ENCODE measurements at regions of chr14 and their contacts with region 1.

Region 1: DNA sequence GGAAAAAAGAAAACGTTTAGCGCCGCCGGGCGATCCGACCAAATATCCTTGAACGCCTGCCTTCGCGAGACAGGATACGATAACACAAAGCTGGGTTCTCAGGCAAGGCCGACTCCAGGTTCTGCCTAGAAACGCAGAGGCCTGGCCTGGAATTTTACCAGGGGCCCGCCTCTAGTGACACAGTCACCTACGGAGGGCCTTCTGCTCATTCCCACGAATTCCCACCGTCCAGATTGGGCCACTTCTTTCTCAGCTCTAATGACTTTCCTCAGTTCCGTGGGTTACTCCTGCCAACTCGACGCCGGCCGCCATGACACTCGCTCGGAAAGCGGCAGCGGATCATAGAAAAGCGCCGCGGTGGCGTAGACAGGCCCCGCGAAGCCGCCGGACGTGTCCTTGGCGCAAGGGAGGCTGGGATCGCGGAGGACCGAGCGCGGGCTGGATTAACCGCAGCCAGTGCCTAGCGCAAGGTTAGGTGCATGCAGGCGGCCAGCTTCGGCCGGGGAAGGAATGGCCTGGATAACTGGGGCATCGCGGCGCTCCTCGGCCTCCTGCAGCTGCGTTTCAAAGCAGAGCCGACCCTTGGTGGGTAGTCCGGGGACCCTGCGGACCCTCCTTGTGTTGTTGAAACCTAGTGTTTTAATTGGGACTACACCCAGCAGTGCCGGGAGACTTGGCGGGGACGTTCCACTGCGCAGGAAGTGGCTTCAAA is at the start of gene TRIP11:
- DNase-seq: peak; percentile 97
- ATAC-seq: peak; percentile 96
- H3K4me3 Mint-ChIP-seq: peak within 1 kb of the TSS; percentile 95
- H3K27ac Mint-ChIP-seq: peak within 1 kb of the TSS; percentile 99
- H3K4me1 Mint-ChIP-seq: peaks cover 31% of the 10 kb centered on the region
- H3K27me3 Mint-ChIP-seq: no peaks in the 10 kb centered on the region
- total RNA-seq, gene TRIP11: 47.9 to 49.7 TPM

Region 2: GRCh38 chr14:91466192-91466591 is 573.7 kb before region 1 on chr14:
- POLR2A ChIA-PET with region 1: no interaction called
- DNase-seq: no peak
- ATAC-seq: no peak
- H3K4me3 Mint-ChIP-seq: no peak overlapping the region
- H3K27ac Mint-ChIP-seq: no peak overlapping the region
- H3K4me1 Mint-ChIP-seq: peaks cover 5% of the 10 kb centered on the region
- H3K27me3 Mint-ChIP-seq: no peaks in the 10 kb centered on the region

Region 3: DNA sequence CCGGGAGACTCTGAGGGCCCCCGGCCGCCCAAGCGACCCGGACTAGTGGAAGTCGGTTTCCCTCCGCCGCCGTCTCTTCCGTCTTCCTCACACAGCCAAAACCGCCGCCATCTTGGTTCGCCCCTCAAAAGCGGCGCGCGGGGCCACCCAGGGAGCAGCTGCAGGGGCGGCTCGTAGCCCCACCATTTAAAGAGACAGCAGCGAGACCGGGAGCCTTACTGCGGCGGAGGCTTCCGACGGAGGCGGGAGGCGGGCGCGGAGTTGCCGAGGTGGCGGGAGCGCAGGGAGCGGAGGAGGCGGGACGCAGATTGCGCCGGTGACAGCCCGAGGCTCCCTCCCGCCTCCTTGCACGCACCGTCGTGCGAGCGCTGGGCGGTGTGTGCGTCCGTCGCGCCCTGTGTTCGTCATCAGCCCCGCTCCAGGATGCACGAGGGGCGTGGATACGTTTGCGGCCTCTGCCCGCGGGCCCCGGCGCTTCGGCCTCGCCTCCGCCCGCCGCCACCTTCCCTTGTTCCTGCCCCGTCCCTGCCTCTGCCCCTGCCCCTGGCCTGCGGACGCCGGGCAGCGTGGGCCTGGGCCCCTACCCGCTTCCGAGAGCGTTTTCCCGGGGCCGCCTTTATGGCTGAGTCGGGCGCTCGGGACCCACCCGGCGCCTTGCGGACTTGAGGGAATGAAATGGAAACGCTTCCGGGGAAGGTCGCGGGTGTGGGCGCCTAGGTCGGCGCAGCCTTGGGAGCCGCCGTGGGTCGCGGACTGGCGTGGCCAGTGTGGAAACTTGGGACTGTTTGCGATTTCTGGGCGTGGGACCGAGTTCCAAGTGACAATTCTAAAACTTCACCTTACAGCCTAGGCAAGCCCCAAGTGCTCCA is 529.5 kb before region 1 on chr14 and contains the start of gene PPP4R3A:
- POLR2A ChIA-PET with region 1: interaction called, 17 read pairs
- DNase-seq: peak; percentile 95
- ATAC-seq: peak; percentile 88
- H3K4me3 Mint-ChIP-seq: peak within 1 kb of the TSS; percentile 98
- H3K27ac Mint-ChIP-seq: peak within 1 kb of the TSS; percentile 100
- H3K4me1 Mint-ChIP-seq: peaks cover 15% of the 10 kb centered on the region
- H3K27me3 Mint-ChIP-seq: peaks cover 2% of the 10 kb centered on the region
- total RNA-seq, gene PPP4R3A: 138 to 142 TPM

Region 4: DNA sequence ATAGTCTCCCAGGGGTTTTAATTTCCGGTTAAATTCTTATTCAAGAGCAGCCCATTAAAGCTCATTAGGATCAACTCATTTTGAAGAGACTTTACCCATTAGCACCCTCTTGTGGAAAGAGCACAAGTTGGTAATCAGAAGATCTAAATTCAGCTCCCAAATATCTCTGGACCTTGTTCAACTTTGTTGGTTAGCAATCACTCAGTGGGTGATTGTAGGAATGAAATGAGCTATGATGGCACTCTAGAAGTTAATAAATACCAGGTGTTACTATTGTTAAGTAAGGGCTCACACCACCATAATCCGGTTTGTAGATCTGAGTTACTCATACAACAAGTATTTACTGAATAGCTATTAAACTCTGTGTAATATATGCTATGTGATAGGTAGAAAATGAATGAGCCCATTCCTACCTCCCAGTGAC is 42.9 kb before region 1 on chr14:
- POLR2A ChIA-PET with region 1: interaction called, 13 read pairs
- DNase-seq: no peak
- ATAC-seq: peak; percentile 32
- H3K4me3 Mint-ChIP-seq: no peak overlapping the region
- H3K27ac Mint-ChIP-seq: peak overlapping the region; percentile 70
- H3K4me1 Mint-ChIP-seq: peaks cover 23% of the 10 kb centered on the region
- H3K27me3 Mint-ChIP-seq: no peaks in the 10 kb centered on the region

Region 5: DNA sequence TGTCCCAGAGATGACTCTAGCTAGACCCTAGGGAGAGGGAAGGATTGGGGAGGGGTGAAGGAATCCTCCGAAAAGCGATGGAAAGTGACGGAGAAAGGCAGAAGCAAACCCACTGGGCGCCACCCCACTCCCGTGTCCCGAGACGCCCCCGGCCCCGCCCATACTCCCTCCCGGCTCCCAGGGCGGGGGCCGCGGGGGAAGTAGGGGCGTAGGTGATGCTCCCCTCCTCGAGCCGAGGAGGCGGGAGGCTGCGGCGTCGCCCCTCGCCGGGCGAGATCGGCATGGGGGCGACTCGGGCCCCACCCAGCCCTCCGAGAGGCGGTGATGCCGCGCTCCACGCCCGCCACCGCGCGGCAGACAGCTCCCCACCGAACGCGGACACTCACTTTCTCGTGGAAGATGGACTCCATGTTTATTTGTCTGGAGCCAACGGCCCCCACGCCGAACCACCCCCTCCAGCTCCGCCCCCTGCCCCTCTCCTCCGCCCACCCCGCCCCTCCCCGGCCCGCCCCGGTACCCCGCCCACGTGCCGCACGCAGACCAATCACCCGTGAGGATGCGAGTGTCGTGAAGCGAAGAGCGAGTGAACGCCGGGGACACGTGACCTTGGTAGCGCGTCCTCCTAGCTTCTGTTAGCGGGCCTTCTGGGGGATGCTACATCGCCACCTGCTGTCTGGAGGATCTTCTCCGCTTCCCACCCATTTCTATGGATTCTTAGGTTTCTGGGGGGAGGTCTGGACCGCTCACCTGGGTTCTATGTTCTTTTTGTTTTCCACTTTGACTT is 66.5 kb after region 1 on chr14 and contains the start of gene ATXN3:
- POLR2A ChIA-PET with region 1: interaction called, 31 read pairs
- DNase-seq: peak; percentile 88
- ATAC-seq: peak; percentile 95
- H3K4me3 Mint-ChIP-seq: peak within 1 kb of the TSS; percentile 96
- H3K27ac Mint-ChIP-seq: peak within 1 kb of the TSS; percentile 88
- H3K4me1 Mint-ChIP-seq: peaks cover 29% of the 10 kb centered on the region
- H3K27me3 Mint-ChIP-seq: no peaks in the 10 kb centered on the region
- total RNA-seq, gene ATXN3: 39.1 to 41.8 TPM

Region 6: DNA sequence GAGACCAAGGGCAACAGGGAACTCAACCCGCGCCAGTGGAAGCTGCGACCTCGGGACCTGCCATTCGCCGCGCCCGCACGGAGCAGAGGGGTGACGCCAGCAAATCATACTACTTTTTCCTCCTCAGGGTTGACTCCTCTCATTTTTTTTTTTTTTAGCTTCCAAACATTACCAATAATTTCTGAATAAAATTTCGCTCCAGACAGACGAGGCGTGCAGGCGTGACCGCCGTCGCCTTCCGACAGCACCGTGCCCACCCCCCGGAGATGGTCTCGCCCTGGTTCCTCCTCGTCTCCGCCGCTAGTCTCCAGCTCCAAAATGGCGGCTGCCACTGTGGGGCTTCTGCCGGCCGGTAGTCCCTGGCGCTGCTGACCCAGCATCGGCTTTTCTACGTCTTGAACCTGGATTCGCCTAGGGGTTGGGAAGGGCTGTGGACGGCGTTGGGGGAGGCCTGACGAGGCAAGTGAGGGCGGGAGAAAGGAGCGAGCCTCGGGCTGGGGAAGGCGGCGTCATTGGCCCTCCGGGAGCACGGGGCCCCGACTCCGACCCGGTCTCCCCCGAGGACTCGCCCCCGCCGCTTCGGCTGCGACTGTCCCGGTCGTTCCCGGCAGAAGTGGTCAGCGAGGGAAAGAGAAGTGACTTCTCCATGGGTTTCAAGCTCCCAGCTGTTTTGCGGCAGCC is 81.9 kb after region 1 on chr14 and contains the starts of genes CPSF2 and NDUFB1:
- POLR2A ChIA-PET with region 1: interaction called, 27 read pairs
- DNase-seq: peak; percentile 91
- ATAC-seq: peak; percentile 89
- H3K4me3 Mint-ChIP-seq: peak within 1 kb of the TSS; percentile 96
- H3K27ac Mint-ChIP-seq: peak within 1 kb of the TSS; percentile 100
- H3K4me1 Mint-ChIP-seq: peaks cover 28% of the 10 kb centered on the region
- H3K27me3 Mint-ChIP-seq: no peaks in the 10 kb centered on the region
- total RNA-seq, gene CPSF2: 70.6 to 76.0 TPM
- total RNA-seq, gene NDUFB1: 126 to 138 TPM

Measured in activated naive CD8-positive, alpha-beta T cell treated with anti-CD3 and anti-CD28 coated beads, Interleukin-2, amount 10 ng/mL, durations not matched to agents 7 days and 5 days (primary cell).